Activated naive CD4-positive, alpha-beta T cell treated with anti-CD3 and anti-CD28 coated beads for 36 hours (primary cell): ENCODE measurements at regions of chr10 and their contacts with region 1.

Region 1: GRCh38 chr10:62183442-62183841 is 85.2 kb downstream of the RTKN2 start:
- DNase-seq: peak; percentile 68
- H3K4me3 Mint-ChIP-seq: no peak overlapping the region
- H3K27ac Mint-ChIP-seq: peak overlapping the region; percentile 99
- H3K4me1 Mint-ChIP-seq: peaks cover 88% of the 10 kb centered on the region
- H3K27me3 Mint-ChIP-seq: no peaks in the 10 kb centered on the region

Region 2: DNA sequence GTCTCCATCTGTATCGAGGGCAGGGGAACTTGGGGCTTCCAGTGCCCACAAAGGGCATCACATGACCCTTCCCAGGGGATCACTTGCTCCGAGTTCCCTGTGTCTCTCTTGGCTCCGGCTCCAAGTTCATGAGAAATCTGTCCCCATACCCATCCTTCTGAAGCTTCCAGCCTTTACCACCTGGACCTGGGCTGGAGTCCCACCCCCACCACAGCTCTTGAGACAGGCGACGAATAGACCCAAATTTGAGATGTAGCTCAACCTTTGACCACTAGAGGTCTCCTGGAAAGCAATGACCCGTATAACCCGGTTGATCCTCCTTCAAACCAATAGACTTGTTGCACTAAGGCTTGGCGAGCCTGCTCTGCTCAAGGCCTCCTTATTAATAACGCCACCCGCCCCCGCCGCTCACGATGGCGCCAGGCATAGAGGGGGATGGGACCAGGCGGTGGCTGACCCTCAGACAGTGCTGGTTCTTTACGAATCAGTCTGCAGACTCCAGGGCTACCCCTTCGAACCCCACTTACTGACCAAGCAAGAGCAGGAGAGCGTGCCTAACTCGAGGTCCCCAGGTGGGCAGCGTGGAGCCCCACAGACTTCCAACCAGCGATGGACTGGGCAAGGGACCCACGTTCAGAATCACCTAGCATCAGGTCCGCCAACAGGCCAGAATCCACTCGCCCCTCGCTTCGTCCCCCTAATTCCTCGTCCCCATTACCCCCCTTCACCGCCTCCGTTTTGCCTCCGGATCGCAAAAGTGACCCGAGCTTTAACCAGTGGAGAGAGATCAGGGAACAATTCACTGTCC is 286.4 kb before region 1 on chr10:
- CTCF ChIA-PET with region 1: interaction called, 8 read pairs
- intact Hi-C with region 1: loop called (anchors 1 kb)
- DNase-seq: peak; percentile 78
- H3K4me3 Mint-ChIP-seq: peak overlapping the region; percentile 77
- H3K27ac Mint-ChIP-seq: peak overlapping the region; percentile 90
- H3K4me1 Mint-ChIP-seq: peaks cover 40% of the 10 kb centered on the region
- H3K27me3 Mint-ChIP-seq: no peaks in the 10 kb centered on the region

Region 3: GRCh38 chr10:61992671-61993668 is 190.5 kb before region 1 on chr10:
- CTCF ChIA-PET with region 1: interaction called, 4 read pairs
- intact Hi-C with region 1: loop called (anchors 1 kb)
- DNase-seq: peak; percentile 84
- H3K4me3 Mint-ChIP-seq: peak overlapping the region; percentile 47
- H3K27ac Mint-ChIP-seq: peak overlapping the region; percentile 96
- H3K4me1 Mint-ChIP-seq: peaks cover 85% of the 10 kb centered on the region
- H3K27me3 Mint-ChIP-seq: no peaks in the 10 kb centered on the region

Region 4: GRCh38 chr10:62133618-62134017 is 49.8 kb before region 1 on chr10:
- CTCF ChIA-PET with region 1: no interaction called
- intact Hi-C with region 1: loop called (anchors 2 kb)
- DNase-seq: no peak
- H3K4me3 Mint-ChIP-seq: no peak overlapping the region
- H3K27ac Mint-ChIP-seq: no peak overlapping the region
- H3K4me1 Mint-ChIP-seq: peaks cover 6% of the 10 kb centered on the region
- H3K27me3 Mint-ChIP-seq: no peaks in the 10 kb centered on the region

Region 5: GRCh38 chr10:62244780-62245467 is 61.5 kb after region 1 on chr10:
- CTCF ChIA-PET with region 1: interaction called, 11 read pairs
- intact Hi-C with region 1: loop called (anchors 1 kb)
- DNase-seq: peak; percentile 74
- H3K4me3 Mint-ChIP-seq: no peak overlapping the region
- H3K27ac Mint-ChIP-seq: peak overlapping the region; percentile 76
- H3K4me1 Mint-ChIP-seq: peaks cover 38% of the 10 kb centered on the region
- H3K27me3 Mint-ChIP-seq: no peaks in the 10 kb centered on the region

Region 6: GRCh38 chr10:62454696-62455389 is 271.4 kb after region 1 on chr10:
- CTCF ChIA-PET with region 1: no interaction called
- intact Hi-C with region 1: no loop called
- DNase-seq: no peak
- H3K4me3 Mint-ChIP-seq: no peak overlapping the region
- H3K27ac Mint-ChIP-seq: no peak overlapping the region
- H3K4me1 Mint-ChIP-seq: no peaks in the 10 kb centered on the region
- H3K27me3 Mint-ChIP-seq: no peaks in the 10 kb centered on the region

Region 7: GRCh38 chr10:62732841-62733653 is 549.6 kb after region 1 on chr10:
- CTCF ChIA-PET with region 1: no interaction called
- intact Hi-C with region 1: loop called (anchors 1 kb)
- DNase-seq: peak; percentile 67
- H3K4me3 Mint-ChIP-seq: peak overlapping the region; percentile 26
- H3K27ac Mint-ChIP-seq: no peak overlapping the region
- H3K4me1 Mint-ChIP-seq: peaks cover 20% of the 10 kb centered on the region
- H3K27me3 Mint-ChIP-seq: peaks cover 5% of the 10 kb centered on the region